Calu3 (cell line): ENCODE measurements at regions of chr6 and their contacts with region 1.

Region 1: GRCh38 chr6:14590586-14590985 is 473.0 kb downstream of the CD83 start:
- DNase-seq: no peak
- H3K4me3 Mint-ChIP-seq: no peak overlapping the region
- H3K27ac Mint-ChIP-seq: no peak overlapping the region
- H3K4me1 Mint-ChIP-seq: no peaks in the 10 kb centered on the region
- H3K27me3 Mint-ChIP-seq: peaks cover 56% of the 10 kb centered on the region
- CTCF ChIP-seq: no peak

Region 2: DNA sequence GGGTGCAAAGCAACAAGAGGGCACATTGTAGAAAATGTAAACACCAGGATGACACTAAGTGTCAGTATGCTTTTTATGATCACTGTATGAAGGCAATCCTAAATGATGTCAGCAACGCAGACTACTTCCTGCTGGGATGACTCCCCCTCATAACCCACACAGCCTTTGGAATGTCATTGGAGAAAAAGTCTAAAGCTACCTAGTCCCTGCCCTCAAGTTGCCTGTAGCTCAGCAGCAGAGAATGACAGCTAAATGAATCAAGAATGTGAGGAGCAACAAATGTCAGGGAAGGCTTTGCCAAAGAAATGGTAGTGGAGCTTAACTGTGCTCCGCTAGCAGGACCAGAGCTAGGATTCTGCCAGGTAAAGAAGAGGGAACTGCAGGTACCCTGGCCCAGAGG is 82.6 kb after region 1 on chr6:
- CTCF ChIA-PET with region 1: interaction called, 10 read pairs
- intact Hi-C with region 1: no loop called
- DNase-seq: no peak
- H3K4me3 Mint-ChIP-seq: no peak overlapping the region
- H3K27ac Mint-ChIP-seq: no peak overlapping the region
- H3K4me1 Mint-ChIP-seq: peaks cover 8% of the 10 kb centered on the region
- H3K27me3 Mint-ChIP-seq: no peaks in the 10 kb centered on the region
- CTCF ChIP-seq: no peak